ENCODE measurements at regions of chr9 and their contacts with region 1.

Region 1: GRCh38 chr9:2727966-2728613 is 10.8 kb downstream of the KCNV2 start:
- DNase-seq: no peak
- ATAC-seq: peak; percentile 80 to 95 (median 90)
- H3K4me3 ChIP-seq: no peak overlapping the region
- H3K27ac ChIP-seq: peak overlapping the region; percentile 58
- H3K4me1 ChIP-seq: peaks cover 18% of the 10 kb centered on the region
- H3K27me3 ChIP-seq: no peaks in the 10 kb centered on the region
- CTCF ChIP-seq: peak; percentile 77

Region 2: GRCh38 chr9:2132484-2133082 is 595.5 kb before region 1 on chr9:
- intact Hi-C with region 1: loop called (anchors 5 to 10 kb)
- DNase-seq: no peak
- ATAC-seq: peak in 3 of 4 donors; percentile 56 to 78 (median 68)
- H3K4me3 ChIP-seq: no peak overlapping the region
- H3K27ac ChIP-seq: no peak overlapping the region
- H3K4me1 ChIP-seq: peaks cover 28% of the 10 kb centered on the region
- H3K27me3 ChIP-seq: no peaks in the 10 kb centered on the region
- CTCF ChIP-seq: peak; percentile 74

Region 3: DNA sequence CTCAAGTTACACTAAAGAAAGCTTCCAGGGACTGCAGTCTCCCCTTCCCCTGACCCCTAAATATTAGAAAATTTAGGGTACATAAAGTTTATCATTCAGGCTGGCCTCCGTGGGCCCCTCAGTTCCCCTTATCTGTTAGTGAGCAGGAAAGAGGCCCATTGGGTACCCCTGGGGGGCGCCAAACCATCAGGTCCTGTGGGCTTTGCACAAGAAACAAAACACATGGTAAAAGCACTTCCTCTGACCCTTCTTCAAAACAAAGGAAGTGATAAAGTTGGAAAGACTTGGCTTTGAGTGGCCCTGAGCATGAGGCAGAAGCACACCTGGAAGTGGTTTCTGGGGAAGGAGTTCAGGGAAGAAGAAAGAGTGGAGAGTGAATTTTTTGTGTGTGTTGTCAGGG is 500.0 kb before region 1 on chr9:
- intact Hi-C with region 1: loop called in 1 of 2 experiments (anchors 5 kb)
- DNase-seq: peak in 1 of 2 donors; percentile 54
- ATAC-seq: peak in 3 of 4 donors; percentile 54 to 73 (median 65)
- H3K4me3 ChIP-seq: no peak overlapping the region
- H3K27ac ChIP-seq: no peak overlapping the region
- H3K4me1 ChIP-seq: peaks cover 5% of the 10 kb centered on the region
- H3K27me3 ChIP-seq: no peaks in the 10 kb centered on the region
- CTCF ChIP-seq: peak; percentile 46

Region 4: DNA sequence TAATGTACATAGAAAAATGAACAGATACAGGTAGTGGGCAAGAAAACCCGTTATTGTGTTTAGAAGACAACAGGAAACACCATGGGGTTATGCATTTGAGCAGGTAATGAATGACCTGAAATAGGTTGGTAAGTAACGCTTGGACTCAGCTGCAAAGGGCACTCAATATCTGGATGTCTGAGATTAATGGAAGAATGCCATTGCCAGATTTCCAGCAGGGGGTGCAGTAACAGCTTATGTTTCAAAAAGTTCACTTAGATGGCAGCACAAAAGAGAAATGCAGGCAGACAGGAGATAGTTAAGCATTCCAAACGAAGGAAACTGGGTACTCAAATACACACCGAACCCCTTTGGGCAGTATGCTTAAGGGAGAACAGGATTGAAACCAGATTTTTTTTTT is 392.0 kb before region 1 on chr9:
- intact Hi-C with region 1: loop called in 1 of 2 experiments (anchors 10 kb)
- DNase-seq: no peak
- ATAC-seq: no peak
- H3K4me3 ChIP-seq: no peak overlapping the region
- H3K27ac ChIP-seq: no peak overlapping the region
- H3K4me1 ChIP-seq: no peaks in the 10 kb centered on the region
- H3K27me3 ChIP-seq: no peaks in the 10 kb centered on the region
- CTCF ChIP-seq: peak; percentile 12

Region 5: GRCh38 chr9:2469681-2470221 is 258.3 kb before region 1 on chr9:
- intact Hi-C with region 1: loop called in 1 of 2 experiments (anchors 10 kb)
- DNase-seq: no peak
- ATAC-seq: peak; percentile 31 to 59 (median 52)
- H3K4me3 ChIP-seq: no peak overlapping the region
- H3K27ac ChIP-seq: no peak overlapping the region
- H3K4me1 ChIP-seq: peaks cover 8% of the 10 kb centered on the region
- H3K27me3 ChIP-seq: no peaks in the 10 kb centered on the region
- CTCF ChIP-seq: no peak

Region 6: DNA sequence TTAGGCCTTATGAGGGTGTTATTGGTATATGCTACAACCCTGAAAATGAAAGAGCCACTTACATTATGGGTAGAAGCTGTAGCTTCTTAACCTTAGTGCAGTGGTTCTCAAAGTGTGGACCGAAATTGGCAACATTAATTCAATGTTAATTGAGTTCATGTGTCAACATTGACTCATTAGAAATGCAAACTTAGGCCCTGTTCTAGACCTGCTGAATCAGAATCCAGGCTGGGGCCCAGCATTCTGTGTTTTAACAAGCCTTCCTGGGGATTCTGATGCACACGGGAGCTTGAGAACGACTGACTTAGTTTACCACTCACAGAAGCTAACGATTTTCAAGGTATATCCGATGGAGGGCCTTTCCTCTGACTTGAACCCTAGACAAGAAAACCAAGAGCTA is 99.2 kb before region 1 on chr9:
- intact Hi-C with region 1: loop called in 1 of 2 experiments (anchors 2 kb)
- DNase-seq: no peak
- ATAC-seq: no peak
- H3K4me3 ChIP-seq: no peak overlapping the region
- H3K27ac ChIP-seq: peak overlapping the region; percentile 81
- H3K4me1 ChIP-seq: peaks cover 56% of the 10 kb centered on the region
- H3K27me3 ChIP-seq: no peaks in the 10 kb centered on the region
- CTCF ChIP-seq: no peak

Region 7: DNA sequence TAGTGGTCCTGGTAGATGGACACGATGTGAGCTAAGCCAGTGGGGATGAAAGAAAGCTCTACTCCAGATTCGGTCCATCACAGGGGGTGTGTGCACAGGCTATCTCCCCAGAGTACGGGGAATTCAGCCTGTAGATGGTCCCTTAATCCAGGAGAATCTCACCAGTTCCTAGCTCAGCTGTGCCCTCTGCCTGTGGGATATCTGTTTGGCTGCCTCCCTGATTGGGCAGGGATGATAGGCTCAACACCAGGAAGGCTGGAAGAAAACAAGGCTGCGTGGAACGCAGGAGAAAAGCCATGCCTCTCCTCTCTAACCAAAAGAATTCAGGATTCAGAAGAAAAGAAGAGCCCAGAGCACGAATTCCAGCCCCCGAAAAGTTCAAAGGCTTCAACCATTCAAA is 65.6 kb before region 1 on chr9:
- intact Hi-C with region 1: loop called (anchors 5 kb)
- DNase-seq: no peak
- ATAC-seq: peak; percentile 26 to 65 (median 54)
- H3K4me3 ChIP-seq: no peak overlapping the region
- H3K27ac ChIP-seq: peak overlapping the region; percentile 78
- H3K4me1 ChIP-seq: peaks cover 19% of the 10 kb centered on the region
- H3K27me3 ChIP-seq: no peaks in the 10 kb centered on the region
- CTCF ChIP-seq: no peak